B cell (primary cell): ENCODE measurements at regions of chr11 and their contacts with region 1.

Region 1: DNA sequence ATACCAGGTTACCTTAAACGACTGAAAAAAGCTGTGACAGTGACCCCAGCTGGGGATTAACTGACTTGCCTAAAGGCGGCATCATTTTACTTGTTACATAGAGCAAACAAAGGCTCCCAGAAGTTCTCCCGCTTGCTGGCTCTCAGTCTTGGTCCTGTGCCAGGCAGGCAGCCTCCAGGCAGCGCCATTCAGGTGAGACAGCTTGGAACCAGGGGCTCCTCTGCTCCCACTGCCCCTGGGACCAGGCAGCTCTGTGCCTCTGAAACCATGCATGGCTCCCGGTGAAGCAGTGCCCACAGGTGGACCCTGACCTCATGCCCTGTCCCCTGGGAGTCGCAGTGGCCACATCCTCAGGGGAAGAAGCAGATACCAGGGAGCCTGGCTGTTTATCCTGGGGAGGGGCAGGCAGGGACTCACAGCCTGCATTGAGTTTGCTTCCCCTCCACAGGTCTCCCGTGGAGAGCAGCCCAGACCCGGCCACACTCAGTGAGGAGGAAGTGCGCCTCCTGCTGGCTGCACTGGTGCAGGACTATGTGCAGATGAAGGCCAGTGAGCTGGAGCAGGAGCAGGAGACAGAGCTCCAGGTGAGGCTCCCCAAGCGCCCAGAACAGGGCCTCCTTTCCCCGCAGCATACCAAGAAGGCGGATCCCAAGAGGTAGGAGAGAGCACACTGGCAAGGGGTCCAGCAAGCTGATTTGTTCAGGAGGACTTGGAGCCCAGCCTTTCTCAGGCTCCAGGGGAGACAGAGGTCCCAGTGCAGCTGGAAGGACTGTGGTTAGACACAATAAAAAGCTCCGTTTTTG is 15.6 kb upstream of the CYP2R1 start:
- DNase-seq: peak; percentile 85
- ATAC-seq: peak; percentile 37
- H3K4me3 ChIP-seq: no peak overlapping the region
- H3K4me3 Mint-ChIP-seq: no peak overlapping the region
- H3K27ac ChIP-seq: no peak overlapping the region
- H3K27ac Mint-ChIP-seq: peak overlapping the region; percentile 70
- H3K4me1 ChIP-seq: peaks cover 32 to 44% of the 10 kb centered on the region in 2 donors
- H3K4me1 Mint-ChIP-seq: peaks cover 45% of the 10 kb centered on the region
- H3K27me3 ChIP-seq: peaks cover 0 to 4% (median 0%) of the 10 kb centered on the region in 4 experiments
- H3K27me3 Mint-ChIP-seq: peaks cover 2% of the 10 kb centered on the region
- CTCF ChIP-seq: peak; percentile 81

Region 2: GRCh38 chr11:14308114-14308896 is 599.3 kb before region 1 on chr11:
- CTCF ChIA-PET with region 1: no interaction called
- POLR2A ChIA-PET with region 1: no interaction called
- intact Hi-C with region 1: loop called (anchors 5 kb)
- DNase-seq: peak; percentile 61
- ATAC-seq: peak; percentile 65
- H3K4me3 ChIP-seq: peak overlapping the region in 1 of 5 experiments; percentile 8
- H3K4me3 Mint-ChIP-seq: peak overlapping the region; percentile 0
- H3K27ac ChIP-seq: peak overlapping the region; percentile 64 to 97
- H3K27ac Mint-ChIP-seq: no peak overlapping the region
- H3K4me1 ChIP-seq: peaks cover 83 to 90% of the 10 kb centered on the region in 2 donors
- H3K4me1 Mint-ChIP-seq: peaks cover 41% of the 10 kb centered on the region
- H3K27me3 ChIP-seq: no peaks in the 10 kb centered on the region
- H3K27me3 Mint-ChIP-seq: no peaks in the 10 kb centered on the region
- CTCF ChIP-seq: peak; percentile 74

Region 3: DNA sequence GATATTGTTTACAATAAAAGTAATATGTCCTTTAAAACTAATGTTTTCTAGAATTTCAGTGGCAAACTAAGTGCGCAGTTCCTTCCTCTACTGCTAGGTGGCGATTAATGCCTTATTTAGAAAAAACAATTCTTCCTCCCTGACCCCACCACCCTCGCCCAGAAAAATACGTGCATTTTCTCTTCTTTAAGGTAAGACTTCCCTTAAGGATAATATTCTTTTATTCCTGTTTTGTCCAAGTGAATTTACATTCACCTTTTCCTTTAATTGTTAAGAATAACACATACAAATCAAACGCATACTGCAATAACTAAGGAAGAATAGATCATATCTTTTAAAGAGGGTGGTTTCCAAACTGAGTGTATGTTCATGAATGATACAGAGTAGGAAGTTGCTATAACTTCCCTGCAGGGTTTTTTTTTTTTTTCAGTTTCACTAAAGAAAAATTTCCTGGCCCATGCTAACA is 370.4 kb before region 1 on chr11:
- CTCF ChIA-PET with region 1: interaction called, 92 read pairs
- POLR2A ChIA-PET with region 1: no interaction called
- intact Hi-C with region 1: loop called (anchors 1 kb)
- DNase-seq: peak; percentile 77
- ATAC-seq: peak; percentile 83
- H3K4me3 ChIP-seq: peak overlapping the region in 3 of 5 experiments; percentile 8 to 58 (median 12)
- H3K4me3 Mint-ChIP-seq: peak overlapping the region; percentile 82
- H3K27ac ChIP-seq: peak overlapping the region; percentile 22 to 69
- H3K27ac Mint-ChIP-seq: no peak overlapping the region
- H3K4me1 ChIP-seq: no peaks in the 10 kb centered on the region
- H3K4me1 Mint-ChIP-seq: peaks cover 7% of the 10 kb centered on the region
- H3K27me3 ChIP-seq: no peaks in the 10 kb centered on the region
- H3K27me3 Mint-ChIP-seq: peaks cover 4% of the 10 kb centered on the region
- CTCF ChIP-seq: peak; percentile 92

Region 4: GRCh38 chr11:14643697-14644225 is 263.9 kb before region 1 on chr11 and contains the start of gene PDE3B:
- CTCF ChIA-PET with region 1: interaction called, 67 read pairs
- POLR2A ChIA-PET with region 1: no interaction called
- intact Hi-C with region 1: loop called (anchors 2 kb)
- DNase-seq: peak; percentile 72
- ATAC-seq: peak; percentile 74
- H3K4me3 ChIP-seq: peak within 1 kb of the TSS; percentile 58 to 92 (median 73)
- H3K4me3 Mint-ChIP-seq: peak within 1 kb of the TSS; percentile 92
- H3K27ac ChIP-seq: peak within 1 kb of the TSS in 1 of 2 donors; percentile 38
- H3K27ac Mint-ChIP-seq: peak within 1 kb of the TSS; percentile 64
- H3K4me1 ChIP-seq: peaks cover 7 to 17% of the 10 kb centered on the region in 2 donors
- H3K4me1 Mint-ChIP-seq: peaks cover 9% of the 10 kb centered on the region
- H3K27me3 ChIP-seq: peaks cover 0 to 29% (median 14%) of the 10 kb centered on the region in 4 experiments
- H3K27me3 Mint-ChIP-seq: peaks cover 40% of the 10 kb centered on the region
- CTCF ChIP-seq: peak; percentile 3
- total RNA-seq, gene PDE3B: 60.7 and 70.7 TPM in 2 replicates

Region 5: DNA sequence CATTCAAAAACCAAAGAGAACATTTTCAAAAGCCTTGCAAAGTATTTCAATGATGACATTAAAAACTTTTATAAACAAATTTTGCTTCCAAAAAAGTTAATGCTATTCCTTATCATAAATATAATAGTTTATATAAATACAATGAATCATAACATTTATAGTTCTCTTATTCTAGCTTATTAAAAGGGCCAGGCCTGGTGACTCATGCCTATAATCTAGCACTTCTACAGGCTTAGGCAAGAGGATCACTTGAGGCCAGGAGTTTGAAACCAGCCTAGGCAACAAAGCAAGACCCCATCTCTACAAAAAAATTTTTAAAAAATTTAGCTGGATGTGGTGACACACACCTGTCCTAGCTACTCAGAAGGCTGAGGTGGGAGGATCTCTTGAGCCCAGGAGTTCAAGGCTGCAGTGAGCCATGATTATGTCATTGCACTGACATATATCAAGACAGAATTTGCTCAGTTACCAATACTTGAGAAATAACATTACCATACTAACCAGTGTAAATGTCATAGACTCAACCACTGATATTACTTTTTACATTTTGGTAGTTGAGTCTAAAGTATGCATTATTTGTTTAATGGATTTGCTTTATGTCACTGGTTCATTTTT is 72.0 kb before region 1 on chr11:
- CTCF ChIA-PET with region 1: no interaction called
- POLR2A ChIA-PET with region 1: no interaction called
- intact Hi-C with region 1: no loop called
- DNase-seq: no peak
- ATAC-seq: no peak
- H3K4me3 ChIP-seq: no peak overlapping the region
- H3K4me3 Mint-ChIP-seq: no peak overlapping the region
- H3K27ac ChIP-seq: no peak overlapping the region
- H3K27ac Mint-ChIP-seq: no peak overlapping the region
- H3K4me1 ChIP-seq: no peaks in the 10 kb centered on the region
- H3K4me1 Mint-ChIP-seq: no peaks in the 10 kb centered on the region
- H3K27me3 ChIP-seq: no peaks in the 10 kb centered on the region
- H3K27me3 Mint-ChIP-seq: peaks cover 7% of the 10 kb centered on the region
- CTCF ChIP-seq: no peak

Region 6: GRCh38 chr11:14882196-14882595 is 25.4 kb before region 1 on chr11:
- CTCF ChIA-PET with region 1: interaction called, 14 read pairs
- POLR2A ChIA-PET with region 1: no interaction called
- intact Hi-C with region 1: no loop called
- DNase-seq: no peak
- ATAC-seq: no peak
- H3K4me3 ChIP-seq: no peak overlapping the region
- H3K4me3 Mint-ChIP-seq: no peak overlapping the region
- H3K27ac ChIP-seq: no peak overlapping the region
- H3K27ac Mint-ChIP-seq: no peak overlapping the region
- H3K4me1 ChIP-seq: peaks cover 5 to 9% of the 10 kb centered on the region in 2 donors
- H3K4me1 Mint-ChIP-seq: peaks cover 27% of the 10 kb centered on the region
- H3K27me3 ChIP-seq: no peaks in the 10 kb centered on the region
- H3K27me3 Mint-ChIP-seq: no peaks in the 10 kb centered on the region
- CTCF ChIP-seq: no peak

Region 7: DNA sequence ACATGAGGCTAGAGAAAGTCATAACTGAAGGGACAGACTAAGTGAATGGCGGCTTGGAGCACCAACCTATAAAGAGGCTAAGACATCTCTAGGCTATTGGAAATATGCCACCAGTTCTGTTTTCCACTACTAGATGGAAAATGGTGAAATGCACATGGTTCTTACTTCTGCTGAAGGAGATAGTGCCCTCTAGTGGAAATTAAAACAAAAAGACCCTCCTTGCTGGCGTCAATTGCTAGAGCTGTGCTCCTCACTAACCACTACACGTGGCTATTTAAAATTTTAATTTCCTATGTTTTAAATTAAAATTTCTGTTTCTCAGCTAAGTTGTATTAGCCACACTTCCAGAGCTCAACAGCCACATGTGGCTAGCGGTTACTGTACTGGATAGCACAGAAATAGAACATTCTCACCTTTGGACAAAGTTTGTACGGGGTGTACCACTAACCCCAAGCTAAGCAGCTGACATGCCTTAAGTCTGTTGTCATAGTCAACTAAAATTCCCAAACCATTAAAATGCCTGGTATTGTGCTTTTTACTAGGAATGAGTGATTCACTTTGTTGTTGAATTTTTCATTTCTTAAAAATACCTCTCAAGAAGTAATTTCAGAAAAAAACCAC is 98.6 kb after region 1 on chr11:
- CTCF ChIA-PET with region 1: interaction called, 175 read pairs
- POLR2A ChIA-PET with region 1: no interaction called
- intact Hi-C with region 1: loop called (anchors 1 kb)
- DNase-seq: peak; percentile 55
- ATAC-seq: no peak
- H3K4me3 ChIP-seq: no peak overlapping the region
- H3K4me3 Mint-ChIP-seq: no peak overlapping the region
- H3K27ac ChIP-seq: no peak overlapping the region
- H3K27ac Mint-ChIP-seq: no peak overlapping the region
- H3K4me1 ChIP-seq: no peaks in the 10 kb centered on the region
- H3K4me1 Mint-ChIP-seq: no peaks in the 10 kb centered on the region
- H3K27me3 ChIP-seq: peaks cover 0 to 19% (median 0%) of the 10 kb centered on the region in 4 experiments
- H3K27me3 Mint-ChIP-seq: peaks cover 57% of the 10 kb centered on the region
- CTCF ChIP-seq: peak; percentile 75

Region 8: DNA sequence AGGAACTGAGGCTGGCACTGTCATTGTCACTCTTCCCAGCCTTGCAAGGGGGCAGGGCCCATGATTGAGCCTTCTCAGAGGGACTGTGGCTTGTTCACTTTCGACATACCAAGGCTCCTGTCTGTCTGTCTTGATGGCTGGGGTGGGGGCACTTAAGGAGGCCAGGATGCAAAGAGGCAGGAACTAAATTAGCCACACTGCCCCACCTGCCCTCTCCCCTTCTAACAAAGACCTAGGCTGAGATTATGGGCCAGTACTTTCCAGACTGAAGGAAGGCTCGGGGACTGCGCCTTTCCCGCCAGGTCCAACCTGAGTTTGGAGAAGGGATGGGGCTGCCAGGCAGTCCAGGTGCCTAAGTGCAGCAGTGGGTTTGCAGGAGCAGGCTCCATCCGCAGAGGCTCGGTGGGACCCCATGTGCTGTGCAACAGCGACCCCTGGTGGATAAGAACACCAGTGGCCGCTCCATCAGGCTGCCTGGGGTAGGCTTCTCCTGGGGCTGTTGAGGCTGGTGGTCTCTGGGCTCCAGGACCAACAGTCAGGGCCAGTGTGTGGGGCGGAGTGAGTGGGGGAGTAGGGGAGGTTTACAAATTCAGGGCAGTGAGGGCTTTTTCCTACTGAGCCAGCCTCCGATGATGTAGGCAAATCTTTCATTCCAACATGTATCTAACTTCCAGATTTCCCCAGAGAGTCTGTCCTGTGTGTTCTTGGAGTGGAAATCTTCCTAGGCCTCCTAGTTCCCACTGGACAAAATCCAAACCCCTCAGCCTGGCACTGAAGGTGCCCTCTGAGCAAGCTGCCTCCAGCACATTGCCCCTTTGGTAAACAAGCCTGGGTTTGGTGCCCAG is 301.0 kb after region 1 on chr11:
- CTCF ChIA-PET with region 1: interaction called, 119 read pairs
- POLR2A ChIA-PET with region 1: no interaction called
- intact Hi-C with region 1: loop called (anchors 1 kb)
- DNase-seq: peak; percentile 81
- ATAC-seq: peak; percentile 92
- H3K4me3 ChIP-seq: no peak overlapping the region
- H3K4me3 Mint-ChIP-seq: no peak overlapping the region
- H3K27ac ChIP-seq: no peak overlapping the region
- H3K27ac Mint-ChIP-seq: no peak overlapping the region
- H3K4me1 ChIP-seq: no peaks in the 10 kb centered on the region
- H3K4me1 Mint-ChIP-seq: no peaks in the 10 kb centered on the region
- H3K27me3 ChIP-seq: peaks cover 0 to 17% (median 0%) of the 10 kb centered on the region in 4 experiments
- H3K27me3 Mint-ChIP-seq: peaks cover 19% of the 10 kb centered on the region
- CTCF ChIP-seq: peak; percentile 89